ENCODE measurements at regions of chr22 and their contacts with region 1.

Region 1: GRCh38 chr22:19122143-19122751 is at the start of gene DGCR2:
- ATAC-seq: peak; percentile 84 to 95 (median 94)
- H3K4me3 ChIP-seq: peak within 1 kb of the TSS; percentile 73 to 91 (median 81)
- H3K27ac ChIP-seq: peak within 1 kb of the TSS; percentile 85 to 91
- H3K4me1 ChIP-seq: peaks cover 14 to 16% of the 10 kb centered on the region in 2 donors
- total RNA-seq, gene DGCR2: 31.2 to 53.9 (median 34.0) TPM

Region 2: DNA sequence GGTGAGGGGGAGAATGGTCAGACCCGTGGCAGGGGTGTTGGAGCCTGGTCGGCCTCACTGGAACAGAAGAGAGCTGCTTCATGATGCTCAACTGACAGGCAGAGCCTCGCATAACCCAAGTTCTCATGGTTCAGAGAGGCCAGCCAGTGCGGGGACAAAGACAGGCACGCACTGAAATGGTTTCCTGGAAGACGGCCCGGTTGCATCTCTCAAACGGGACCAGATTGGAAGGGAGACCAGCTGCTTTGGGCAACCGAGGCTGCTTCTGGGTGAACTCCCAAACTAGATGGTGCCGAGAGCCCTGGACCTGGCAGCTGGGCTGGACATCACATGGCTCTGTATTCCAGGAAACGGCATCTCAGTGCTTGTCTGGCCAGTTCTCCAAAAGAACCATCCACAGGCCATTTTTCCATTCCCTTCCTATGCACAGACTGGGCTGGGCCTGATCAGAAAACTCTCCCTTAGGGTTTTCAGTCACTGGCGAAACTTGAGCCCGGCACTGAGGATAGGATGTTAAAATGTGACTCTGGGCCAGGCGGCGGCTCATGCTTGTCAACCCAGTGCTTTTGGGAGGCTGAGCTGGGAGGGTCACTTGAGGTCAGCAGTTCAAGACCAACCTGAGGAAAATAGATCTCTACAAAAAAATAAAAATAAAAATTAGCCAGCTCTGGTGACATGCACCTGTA is 106.0 kb before region 1 on chr22:
- in situ Hi-C with region 1: loop called in 1 of 9 experiments (anchors 25 kb)
- ATAC-seq: peak in 1 of 8 experiments; percentile 86
- H3K4me3 ChIP-seq: no peak overlapping the region
- H3K27ac ChIP-seq: no peak overlapping the region
- H3K4me1 ChIP-seq: no peaks in the 10 kb centered on the region

Region 3: DNA sequence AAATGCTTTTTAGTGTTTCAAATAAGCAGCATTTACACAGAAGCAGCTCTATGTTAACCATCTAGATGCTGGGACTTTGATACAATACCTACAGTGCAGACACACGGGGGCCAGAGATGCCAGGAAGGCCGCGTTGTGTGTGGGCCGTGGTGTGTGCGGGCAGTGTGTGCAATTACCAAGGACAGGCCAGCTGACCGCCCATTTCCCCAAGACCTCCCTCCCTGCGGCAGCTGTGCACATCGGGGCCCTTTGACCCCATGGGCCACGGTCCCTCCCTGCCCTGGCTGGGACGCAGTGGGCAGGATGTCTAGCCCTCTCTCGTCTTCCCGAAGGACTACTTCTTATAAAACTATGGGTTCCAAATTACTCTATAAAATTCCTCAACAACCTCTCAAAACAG is 130.9 kb after region 1 on chr22:
- in situ Hi-C with region 1: no loop called
- ATAC-seq: no peak
- H3K4me3 ChIP-seq: no peak overlapping the region
- H3K27ac ChIP-seq: no peak overlapping the region
- H3K4me1 ChIP-seq: no peaks in the 10 kb centered on the region

Measured in motor neuron (in vitro differentiated cells).